H1 (cell line): ENCODE measurements at regions of chr7 and their contacts with region 1.

Region 1: GRCh38 chr7:130896898-130897514 is 163.0 kb upstream of the KLF14 start:
- DNase-seq: peak in 1 of 2 experiments; percentile 80
- H3K4me3 ChIP-seq: no peak overlapping the region
- H3K27ac ChIP-seq: no peak overlapping the region
- H3K4me1 ChIP-seq: peaks cover 6 to 14% (median 8%) of the 10 kb centered on the region in 4 experiments; a peak in 6 of 7 replicates
- H3K27me3 ChIP-seq: no peaks in the 10 kb centered on the region
- CTCF ChIP-seq: peak; percentile 85 to 89 (median 86)
- EP300 ChIP-seq: no peak
- POLR2A ChIP-seq: no peak
- RAD21 ChIP-seq: peak; percentile 93 to 95

Region 2: GRCh38 chr7:130750755-130751154 is 146.3 kb before region 1 on chr7:
- CTCF ChIA-PET with region 1: no interaction called
- POLR2A ChIA-PET with region 1: no interaction called
- DNase-seq: no peak
- H3K4me3 ChIP-seq: no peak overlapping the region
- H3K27ac ChIP-seq: no peak overlapping the region
- H3K4me1 ChIP-seq: no peaks in the 10 kb centered on the region
- H3K27me3 ChIP-seq: no peaks in the 10 kb centered on the region
- CTCF ChIP-seq: no peak
- EP300 ChIP-seq: no peak
- POLR2A ChIP-seq: no peak
- RAD21 ChIP-seq: no peak

Region 3: GRCh38 chr7:130921391-130922180 is 24.6 kb after region 1 on chr7:
- CTCF ChIA-PET with region 1: interaction called, 18 read pairs
- POLR2A ChIA-PET with region 1: interaction called, 4 read pairs
- DNase-seq: peak in 1 of 2 experiments; percentile 48
- H3K4me3 ChIP-seq: no peak overlapping the region
- H3K27ac ChIP-seq: peak overlapping the region; percentile 44
- H3K4me1 ChIP-seq: peaks cover 0 to 6% (median 4%) of the 10 kb centered on the region in 4 experiments; a peak in 4 of 7 replicates
- H3K27me3 ChIP-seq: no peaks in the 10 kb centered on the region
- CTCF ChIP-seq: 0 out of 4 replicates have a peak, but pooled peaks of 1 of the 3 experiments have one; percentile 8
- EP300 ChIP-seq: no peak
- POLR2A ChIP-seq: no peak
- RAD21 ChIP-seq: 0 out of 4 replicates have a peak, but pooled peaks of 1 of the 2 experiments have one; percentile 8

Region 4: DNA sequence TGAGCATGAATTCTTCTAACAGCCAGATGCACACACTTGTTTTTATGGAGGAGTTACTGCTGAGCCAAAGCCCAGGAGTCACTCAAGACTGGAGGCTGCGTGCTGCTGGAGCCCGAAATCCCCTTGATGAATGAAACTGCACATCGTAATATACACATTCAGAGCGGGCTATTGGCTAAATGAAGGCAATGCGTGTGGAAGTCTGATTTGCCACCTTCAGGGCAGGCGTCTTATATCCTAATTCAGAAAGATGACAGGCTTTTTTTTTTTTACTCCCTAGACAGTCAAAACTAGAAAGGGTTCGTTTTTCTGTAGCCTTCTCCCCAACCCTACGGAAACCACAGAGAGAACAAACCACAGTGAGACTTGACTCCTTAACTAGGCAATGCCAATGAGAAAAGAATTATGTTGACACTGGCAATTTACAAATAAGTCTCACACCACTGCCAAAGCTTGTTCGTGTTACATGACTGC is 64.2 kb after region 1 on chr7:
- CTCF ChIA-PET with region 1: interaction called, 37 read pairs
- POLR2A ChIA-PET with region 1: no interaction called
- DNase-seq: no peak
- H3K4me3 ChIP-seq: no peak overlapping the region
- H3K27ac ChIP-seq: no peak overlapping the region
- H3K4me1 ChIP-seq: peaks cover 0 to 4% (median 0%) of the 10 kb centered on the region in 4 experiments; a peak in 1 of 7 replicates
- H3K27me3 ChIP-seq: no peaks in the 10 kb centered on the region
- CTCF ChIP-seq: no peak
- EP300 ChIP-seq: no peak
- POLR2A ChIP-seq: no peak
- RAD21 ChIP-seq: no peak

Region 5: DNA sequence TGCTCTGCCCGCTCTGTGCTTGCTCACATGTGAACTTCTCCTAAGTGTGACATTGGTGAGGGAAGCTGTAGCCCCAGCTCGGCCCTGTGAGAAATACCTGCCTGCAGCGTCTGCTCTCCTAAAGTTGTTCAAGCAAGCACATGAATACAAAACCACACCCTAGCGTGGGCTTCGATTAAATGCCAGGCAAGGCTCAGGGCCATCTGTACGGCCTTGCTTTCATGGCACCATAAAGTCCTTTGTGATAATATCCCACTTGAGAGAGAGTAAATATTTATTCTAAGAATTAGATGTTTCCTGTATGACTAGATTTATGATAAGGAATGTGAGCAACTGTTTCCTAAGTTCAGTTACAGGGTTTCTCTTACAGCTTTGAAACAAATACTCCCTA is 99.8 kb after region 1 on chr7:
- CTCF ChIA-PET with region 1: interaction called, 42 read pairs
- POLR2A ChIA-PET with region 1: no interaction called
- DNase-seq: no peak
- H3K4me3 ChIP-seq: no peak overlapping the region
- H3K27ac ChIP-seq: no peak overlapping the region
- H3K4me1 ChIP-seq: peaks cover 0 to 10% (median under 1%) of the 10 kb centered on the region in 4 experiments; a peak in 1 of 7 replicates
- H3K27me3 ChIP-seq: no peaks in the 10 kb centered on the region
- CTCF ChIP-seq: no peak
- EP300 ChIP-seq: no peak
- POLR2A ChIP-seq: no peak
- RAD21 ChIP-seq: no peak

Region 6: GRCh38 chr7:131040467-131040932 is 143.5 kb after region 1 on chr7:
- CTCF ChIA-PET with region 1: interaction called, 61 read pairs
- POLR2A ChIA-PET with region 1: interaction called, 5 read pairs
- DNase-seq: peak in 1 of 2 experiments; percentile 62
- H3K4me3 ChIP-seq: no peak overlapping the region
- H3K27ac ChIP-seq: no peak overlapping the region
- H3K4me1 ChIP-seq: peaks cover 3 to 11% (median 7%) of the 10 kb centered on the region in 4 experiments; a peak in 4 of 7 replicates
- H3K27me3 ChIP-seq: no peaks in the 10 kb centered on the region
- CTCF ChIP-seq: peak in 2 of 3 experiments; percentile 79 to 88; a peak in 3 of 4 replicates
- EP300 ChIP-seq: no peak
- POLR2A ChIP-seq: no peak
- RAD21 ChIP-seq: peak; percentile 87 to 89